Prostate gland (tissue), 2 donors: ENCODE measurements at regions of chr11 and their contacts with region 1.

Region 1: GRCh38 chr11:73760679-73761402 is at the start of gene RAB6A:
- DNase-seq: peak; percentile 100
- H3K4me3 ChIP-seq: peak within 1 kb of the TSS; percentile 91 to 98
- H3K27ac ChIP-seq: peak within 1 kb of the TSS; percentile 95 to 98
- H3K4me1 ChIP-seq: no peaks in the 10 kb centered on the region
- H3K27me3 ChIP-seq: no peaks in the 10 kb centered on the region
- CTCF ChIP-seq: peak; percentile 14 to 85 (median 53)
- POLR2A ChIP-seq: peak; percentile 85
- total RNA-seq, gene RAB6A: 152 to 200 TPM

Region 2: DNA sequence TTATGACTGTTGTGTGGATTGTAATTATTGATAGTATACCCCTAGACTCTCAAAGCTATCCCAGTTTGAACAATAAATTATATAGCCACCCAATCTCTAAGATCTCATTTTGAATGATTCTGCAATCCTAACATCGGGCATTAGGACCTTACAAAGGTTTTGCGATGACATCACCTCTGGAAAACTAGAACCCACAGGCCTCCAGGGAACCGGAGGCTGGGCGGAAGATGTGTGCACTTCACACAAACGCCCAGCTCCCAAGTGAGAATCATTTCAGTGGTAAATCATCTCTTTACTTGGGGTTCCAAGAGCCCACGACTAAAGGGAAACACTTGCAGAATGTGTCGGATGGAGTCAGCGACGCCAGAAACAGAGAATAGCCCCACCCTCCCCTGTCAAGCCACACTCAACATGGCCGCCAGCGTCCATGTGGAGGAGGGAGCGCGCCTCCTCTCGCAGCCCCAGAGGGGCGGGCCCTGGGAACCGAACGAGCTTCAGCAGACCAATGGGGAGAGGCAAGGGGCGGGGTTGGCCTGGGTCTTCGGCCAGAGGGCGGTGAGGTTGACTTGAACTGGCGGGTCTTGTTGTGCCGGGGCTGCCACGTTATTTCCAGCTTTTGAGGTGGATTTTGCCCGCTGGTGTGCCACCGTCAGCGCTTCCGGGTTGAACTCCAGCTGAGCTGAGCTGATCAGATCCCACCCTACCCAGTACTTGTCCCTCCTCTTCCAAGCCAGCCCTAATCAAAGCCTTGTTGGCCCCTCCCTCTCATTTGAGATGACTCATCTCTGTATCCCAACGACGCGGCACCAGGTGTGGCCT is 18.5 kb after region 1 on chr11:
- intact Hi-C with region 1: loop called (anchors 2 kb)
- DNase-seq: peak; percentile 98
- H3K4me3 ChIP-seq: peak overlapping the region; percentile 41 to 49
- H3K27ac ChIP-seq: peak overlapping the region; percentile 94 to 96
- H3K4me1 ChIP-seq: no peaks in the 10 kb centered on the region
- H3K27me3 ChIP-seq: no peaks in the 10 kb centered on the region
- CTCF ChIP-seq: peak in 2 of 4 experiments; percentile 19 to 26
- POLR2A ChIP-seq: peak; percentile 67